Thyroid gland (tissue), 4 donors: ENCODE measurements at regions of chr21 and their contacts with region 1.

Region 1: DNA sequence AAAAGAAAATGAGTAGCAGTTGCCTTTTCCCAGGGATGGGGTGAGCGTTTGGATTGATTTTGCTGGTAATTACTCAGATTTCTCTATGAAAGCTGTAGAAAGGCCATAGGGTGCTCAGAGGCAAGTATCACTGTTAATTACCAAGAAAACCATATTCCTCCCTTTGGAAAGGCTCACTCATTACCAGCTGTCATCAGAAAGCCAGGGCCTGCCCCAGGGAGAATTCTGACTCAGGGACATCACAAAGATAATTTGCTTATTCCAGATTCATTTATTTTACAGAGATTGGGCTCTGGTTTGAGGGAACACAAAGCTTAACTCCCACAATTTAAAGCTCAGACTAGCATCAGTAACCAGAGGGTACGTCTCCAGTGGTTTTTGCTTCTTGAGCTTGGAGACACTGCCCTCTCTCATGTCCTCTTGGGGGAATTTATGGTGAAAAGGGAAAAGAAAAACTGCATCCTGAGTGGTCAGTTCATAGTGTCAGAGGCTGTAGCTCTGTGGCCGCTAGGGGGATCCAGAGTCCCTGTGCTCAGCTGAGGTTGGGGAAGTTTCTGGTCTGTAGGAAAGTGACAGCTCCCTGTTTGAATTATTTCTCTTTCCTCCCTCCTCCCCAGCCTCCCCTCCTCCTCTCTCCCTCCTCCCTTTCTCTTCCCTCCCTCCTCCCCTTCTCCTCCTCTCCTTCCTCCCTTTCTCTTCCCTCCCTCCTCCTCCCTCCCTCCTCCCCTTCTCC is 204.3 kb downstream of the KCNJ6 start:
- DNase-seq: peak; percentile 57 to 62
- H3K4me3 ChIP-seq: no peak overlapping the region
- H3K27ac ChIP-seq: no peak overlapping the region
- H3K4me1 ChIP-seq: no peaks in the 10 kb centered on the region
- H3K27me3 ChIP-seq: no peaks in the 10 kb centered on the region
- CTCF ChIP-seq: peak; percentile 56 to 77 (median 64)
- POLR2A ChIP-seq: no peak

Region 2: DNA sequence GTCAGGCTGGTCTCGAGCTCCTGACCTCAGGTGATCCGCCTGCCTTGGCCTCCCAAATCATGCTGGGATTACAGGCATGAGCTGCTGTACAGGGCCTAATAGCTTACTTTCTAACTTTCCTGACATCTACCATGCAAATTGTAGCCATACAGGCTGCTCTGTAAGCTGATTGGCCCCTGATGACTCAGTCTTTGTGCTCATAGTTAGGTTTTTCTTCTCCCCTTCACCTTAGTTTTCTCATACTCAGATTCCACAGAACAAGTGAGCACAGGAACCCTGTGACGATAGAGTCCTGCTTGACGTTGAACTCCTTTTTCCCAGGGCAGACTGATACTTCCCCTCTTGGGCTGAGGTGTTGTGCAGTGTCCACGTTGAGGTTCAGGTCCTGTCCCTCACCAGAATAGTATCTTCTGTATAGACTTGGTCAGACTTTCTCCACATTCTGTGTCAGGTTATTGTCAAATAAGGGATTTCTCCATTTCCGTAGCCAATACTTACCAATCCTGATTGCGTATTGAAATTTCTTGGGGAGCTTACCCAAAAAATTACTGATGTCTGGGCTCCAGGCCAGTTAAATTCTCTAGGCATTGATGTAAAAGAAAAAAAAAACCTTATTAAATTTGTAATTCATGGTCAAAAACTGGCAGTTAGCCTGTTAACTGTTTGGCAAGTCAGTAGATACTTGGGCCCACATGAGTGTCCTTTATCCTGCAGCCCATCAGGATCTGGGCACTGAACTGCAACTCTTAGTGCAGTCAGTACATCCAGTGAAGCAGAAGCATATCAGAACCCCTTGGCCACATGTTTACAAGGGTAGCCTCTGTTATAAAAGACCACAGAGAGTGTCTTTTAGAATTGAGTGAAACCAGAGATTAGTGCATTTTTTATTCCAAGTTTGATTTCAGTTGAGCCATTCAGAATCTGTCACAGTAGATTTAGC is 227.2 kb before region 1 on chr21:
- intact Hi-C with region 1: no loop called
- DNase-seq: peak in 1 of 2 donors; percentile 21
- H3K4me3 ChIP-seq: no peak overlapping the region
- H3K27ac ChIP-seq: no peak overlapping the region
- H3K4me1 ChIP-seq: peaks cover 0 to 9% of the 10 kb centered on the region in 2 donors
- H3K27me3 ChIP-seq: no peaks in the 10 kb centered on the region
- CTCF ChIP-seq: no peak
- POLR2A ChIP-seq: no peak

Region 3: DNA sequence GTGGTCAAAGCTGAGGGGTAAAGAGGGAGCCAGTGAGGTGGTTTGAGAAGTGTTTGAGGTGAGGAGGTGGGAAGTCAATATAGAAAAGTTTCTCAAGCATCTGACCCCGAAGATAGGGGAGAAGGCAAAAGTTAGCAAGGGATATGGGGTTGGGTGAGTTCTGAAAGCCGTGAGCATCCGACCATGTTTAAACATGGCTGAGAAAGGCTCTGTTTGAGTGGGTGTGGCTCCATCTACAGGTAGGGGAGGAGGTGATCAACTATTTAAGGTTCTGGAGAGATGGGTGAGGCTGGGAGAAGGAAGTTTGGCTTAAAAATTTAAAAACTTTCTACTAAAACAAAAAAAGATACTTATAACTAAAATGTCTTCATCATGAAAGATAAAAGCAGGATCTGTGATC is 69.5 kb before region 1 on chr21:
- intact Hi-C with region 1: no loop called
- DNase-seq: peak; percentile 11 to 19
- H3K4me3 ChIP-seq: no peak overlapping the region
- H3K27ac ChIP-seq: no peak overlapping the region
- H3K4me1 ChIP-seq: no peaks in the 10 kb centered on the region
- H3K27me3 ChIP-seq: no peaks in the 10 kb centered on the region
- CTCF ChIP-seq: peak in 4 of 6 experiments; percentile 11 to 35 (median 32)
- POLR2A ChIP-seq: no peak

Region 4: DNA sequence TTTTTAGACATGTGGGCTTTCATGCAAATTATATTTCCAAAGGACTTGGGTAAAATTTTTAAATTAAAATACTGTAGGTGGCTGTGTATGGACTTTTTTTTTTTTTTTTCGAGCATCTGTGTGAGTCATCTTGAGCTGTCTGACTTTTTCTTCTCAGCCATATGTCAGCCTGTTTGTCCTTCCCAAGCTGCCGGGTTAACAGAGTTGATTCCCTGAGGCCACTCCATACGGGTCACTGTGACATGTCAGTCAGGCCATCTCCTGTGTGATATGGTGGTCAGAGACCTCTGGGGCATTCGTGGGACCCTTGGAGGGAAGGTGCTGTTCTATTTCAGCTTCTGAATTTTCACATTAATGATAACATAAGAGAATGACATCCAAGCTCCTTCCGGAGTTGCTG is 56.0 kb after region 1 on chr21:
- intact Hi-C with region 1: no loop called
- DNase-seq: no peak
- H3K4me3 ChIP-seq: no peak overlapping the region
- H3K27ac ChIP-seq: no peak overlapping the region
- H3K4me1 ChIP-seq: no peaks in the 10 kb centered on the region
- H3K27me3 ChIP-seq: no peaks in the 10 kb centered on the region
- CTCF ChIP-seq: no peak
- POLR2A ChIP-seq: no peak

Region 5: GRCh38 chr21:37878946-37879660 is 167.1 kb after region 1 on chr21:
- intact Hi-C with region 1: no loop called
- DNase-seq: no peak
- H3K4me3 ChIP-seq: no peak overlapping the region
- H3K27ac ChIP-seq: no peak overlapping the region
- H3K4me1 ChIP-seq: no peaks in the 10 kb centered on the region
- H3K27me3 ChIP-seq: no peaks in the 10 kb centered on the region
- CTCF ChIP-seq: no peak
- POLR2A ChIP-seq: no peak

Region 6: GRCh38 chr21:38126669-38127303 is 414.8 kb after region 1 on chr21:
- intact Hi-C with region 1: loop called (anchors 10 kb)
- DNase-seq: peak; percentile 68 to 76
- H3K4me3 ChIP-seq: no peak overlapping the region
- H3K27ac ChIP-seq: no peak overlapping the region
- H3K4me1 ChIP-seq: no peaks in the 10 kb centered on the region
- H3K27me3 ChIP-seq: no peaks in the 10 kb centered on the region
- CTCF ChIP-seq: peak; percentile 39 to 78 (median 60)
- POLR2A ChIP-seq: no peak